Sigmoid colon (tissue), 7 donors: ENCODE measurements at regions of chr1 and their contacts with region 1.

Region 1: DNA sequence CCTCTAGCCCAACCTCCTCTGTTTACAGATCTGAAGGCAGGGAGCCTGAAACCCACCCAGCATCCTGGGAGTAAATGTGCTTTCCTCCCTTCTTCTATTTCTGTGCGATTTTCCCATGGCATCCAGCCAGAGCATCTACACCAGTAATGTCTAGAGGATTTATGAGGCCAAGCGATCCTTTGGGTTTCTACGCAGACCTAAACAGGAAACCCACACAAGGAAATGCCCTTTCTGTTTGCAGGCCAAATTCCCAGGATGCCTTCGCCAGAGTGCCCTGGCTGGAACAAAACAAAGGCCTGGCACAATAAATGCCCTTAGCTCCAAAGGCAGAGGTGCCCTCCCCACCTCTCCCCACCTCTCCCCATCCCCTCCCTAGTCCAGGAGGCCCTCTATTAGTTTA is 110.5 kb upstream of the CDC42BPA start:
- DNase-seq: no peak
- H3K4me3 ChIP-seq: no peak overlapping the region
- H3K27ac ChIP-seq: peak overlapping the region; percentile 24 to 76 (median 70)
- H3K4me1 ChIP-seq: peaks cover 0 to 66% (median 57%) of the 10 kb centered on the region in 4 donors
- H3K27me3 ChIP-seq: no peaks in the 10 kb centered on the region
- CTCF ChIP-seq: no peak
- EP300 ChIP-seq: no peak
- POLR2A ChIP-seq: no peak

Region 2: DNA sequence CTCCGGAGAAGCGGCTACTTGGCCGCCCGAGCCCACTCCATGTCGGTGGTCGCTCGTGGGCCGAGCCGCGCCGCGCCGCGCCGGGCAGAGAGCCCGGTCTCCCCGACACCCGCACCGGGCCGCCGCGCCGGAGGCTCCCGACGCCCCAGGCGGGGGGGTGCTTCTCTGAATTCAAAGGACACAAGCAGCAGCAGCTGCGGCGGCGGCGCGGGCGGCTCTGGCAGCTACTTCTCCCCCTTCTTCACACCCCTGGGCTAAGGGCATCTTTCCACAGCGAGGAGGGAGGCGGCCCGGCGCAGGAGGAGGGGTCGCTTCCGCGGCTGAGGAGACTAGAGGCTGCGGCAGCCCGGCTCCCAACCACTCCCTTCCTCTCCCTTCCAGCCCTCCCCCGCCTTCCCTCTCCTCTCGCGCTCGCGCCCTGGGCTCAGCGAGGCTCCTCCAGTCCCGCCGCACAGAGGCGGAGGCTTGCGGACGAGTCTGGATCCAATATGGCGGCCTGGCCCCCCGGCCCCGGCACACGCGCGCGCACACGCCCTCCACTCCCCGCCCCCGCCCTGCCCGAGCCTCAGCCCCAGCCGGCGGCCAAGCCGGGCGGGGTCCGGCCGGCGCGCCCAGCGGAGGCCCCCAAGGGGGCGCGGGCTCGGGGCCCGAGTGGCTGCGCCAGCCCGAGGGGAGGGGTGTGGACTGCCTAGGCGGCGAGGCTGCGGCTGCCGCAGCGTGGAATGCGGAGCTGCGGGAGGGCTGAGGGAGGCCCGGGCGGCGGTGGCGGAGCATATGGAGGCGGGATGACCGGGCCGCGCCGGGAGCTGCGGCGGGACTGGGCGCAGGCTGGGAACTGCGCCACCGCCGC is 110.6 kb before region 1 on chr1 and contains the start of gene CDC42BPA:
- intact Hi-C with region 1: loop called (anchors 2 kb)
- DNase-seq: peak; percentile 94
- H3K4me3 ChIP-seq: peak within 1 kb of the TSS; percentile 65 to 96 (median 85)
- H3K27ac ChIP-seq: peak within 1 kb of the TSS; percentile 86 to 97 (median 96)
- H3K4me1 ChIP-seq: peaks cover 0 to 23% (median 11%) of the 10 kb centered on the region in 4 donors
- H3K27me3 ChIP-seq: no peaks in the 10 kb centered on the region
- CTCF ChIP-seq: no peak
- EP300 ChIP-seq: no peak
- POLR2A ChIP-seq: peak; percentile 38 to 55
- total RNA-seq, gene CDC42BPA: 60.8 to 93.6 (median 66.3) TPM